ENCODE measurements at regions of chr13 and their contacts with region 1.

Region 1: GRCh38 chr13:88526186-88526852 is 855.1 kb downstream of the SLITRK5 start:
- DNase-seq: no peak
- ATAC-seq: no peak
- H3K4me3 ChIP-seq: no peak overlapping the region
- H3K4me3 Mint-ChIP-seq: no peak overlapping the region
- H3K27ac ChIP-seq: no peak overlapping the region
- H3K27ac Mint-ChIP-seq: no peak overlapping the region
- H3K4me1 ChIP-seq: no peaks in the 10 kb centered on the region
- H3K4me1 Mint-ChIP-seq: no peaks in the 10 kb centered on the region
- H3K27me3 ChIP-seq: no peaks in the 10 kb centered on the region
- H3K27me3 Mint-ChIP-seq: no peaks in the 10 kb centered on the region
- CTCF ChIP-seq: no peak

Region 2: GRCh38 chr13:88329066-88329465 is 197.3 kb before region 1 on chr13:
- CTCF ChIA-PET with region 1: no interaction called
- POLR2A ChIA-PET with region 1: no interaction called
- intact Hi-C with region 1: no loop called
- DNase-seq: no peak
- ATAC-seq: no peak
- H3K4me3 ChIP-seq: no peak overlapping the region
- H3K4me3 Mint-ChIP-seq: no peak overlapping the region
- H3K27ac ChIP-seq: no peak overlapping the region
- H3K27ac Mint-ChIP-seq: no peak overlapping the region
- H3K4me1 ChIP-seq: no peaks in the 10 kb centered on the region
- H3K4me1 Mint-ChIP-seq: no peaks in the 10 kb centered on the region
- H3K27me3 ChIP-seq: no peaks in the 10 kb centered on the region
- H3K27me3 Mint-ChIP-seq: no peaks in the 10 kb centered on the region
- CTCF ChIP-seq: no peak

Region 3: GRCh38 chr13:88456151-88456550 is 70.2 kb before region 1 on chr13:
- CTCF ChIA-PET with region 1: no interaction called
- POLR2A ChIA-PET with region 1: no interaction called
- intact Hi-C with region 1: loop called (anchors 1 kb)
- DNase-seq: peak; percentile 59
- ATAC-seq: peak; percentile 61
- H3K4me3 ChIP-seq: no peak overlapping the region
- H3K4me3 Mint-ChIP-seq: peak overlapping the region; percentile 5
- H3K27ac ChIP-seq: peak overlapping the region; percentile 3 to 14
- H3K27ac Mint-ChIP-seq: peak overlapping the region; percentile 33
- H3K4me1 ChIP-seq: peaks cover 10 to 26% of the 10 kb centered on the region in 2 donors
- H3K4me1 Mint-ChIP-seq: peaks cover 21% of the 10 kb centered on the region
- H3K27me3 ChIP-seq: no peaks in the 10 kb centered on the region
- H3K27me3 Mint-ChIP-seq: no peaks in the 10 kb centered on the region
- CTCF ChIP-seq: no peak

Region 4: DNA sequence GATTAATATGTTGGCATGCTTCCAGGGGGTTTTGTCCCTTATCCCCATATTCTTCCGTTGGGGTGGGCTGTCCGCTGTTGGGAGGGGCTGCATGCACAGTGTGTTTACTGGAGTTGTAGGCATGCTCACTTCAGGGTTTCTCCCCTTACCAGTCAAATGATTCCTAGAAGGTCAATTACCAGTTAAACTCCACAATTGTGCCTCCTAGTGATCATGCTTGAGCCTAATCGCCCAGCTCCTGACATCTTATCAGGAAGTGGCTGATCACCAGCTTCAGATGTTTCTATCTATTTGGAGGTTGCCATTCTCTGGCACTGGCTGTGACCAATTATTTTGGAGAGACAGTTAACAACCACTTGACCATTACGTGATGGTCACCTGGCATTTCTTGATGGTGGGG is 234.8 kb after region 1 on chr13:
- CTCF ChIA-PET with region 1: no interaction called
- POLR2A ChIA-PET with region 1: no interaction called
- intact Hi-C with region 1: no loop called
- DNase-seq: no peak
- ATAC-seq: no peak
- H3K4me3 ChIP-seq: no peak overlapping the region
- H3K4me3 Mint-ChIP-seq: no peak overlapping the region
- H3K27ac ChIP-seq: no peak overlapping the region
- H3K27ac Mint-ChIP-seq: no peak overlapping the region
- H3K4me1 ChIP-seq: no peaks in the 10 kb centered on the region
- H3K4me1 Mint-ChIP-seq: no peaks in the 10 kb centered on the region
- H3K27me3 ChIP-seq: no peaks in the 10 kb centered on the region
- H3K27me3 Mint-ChIP-seq: no peaks in the 10 kb centered on the region
- CTCF ChIP-seq: no peak